ENCODE measurements at regions of chr5 and their contacts with region 1.

Region 1: DNA sequence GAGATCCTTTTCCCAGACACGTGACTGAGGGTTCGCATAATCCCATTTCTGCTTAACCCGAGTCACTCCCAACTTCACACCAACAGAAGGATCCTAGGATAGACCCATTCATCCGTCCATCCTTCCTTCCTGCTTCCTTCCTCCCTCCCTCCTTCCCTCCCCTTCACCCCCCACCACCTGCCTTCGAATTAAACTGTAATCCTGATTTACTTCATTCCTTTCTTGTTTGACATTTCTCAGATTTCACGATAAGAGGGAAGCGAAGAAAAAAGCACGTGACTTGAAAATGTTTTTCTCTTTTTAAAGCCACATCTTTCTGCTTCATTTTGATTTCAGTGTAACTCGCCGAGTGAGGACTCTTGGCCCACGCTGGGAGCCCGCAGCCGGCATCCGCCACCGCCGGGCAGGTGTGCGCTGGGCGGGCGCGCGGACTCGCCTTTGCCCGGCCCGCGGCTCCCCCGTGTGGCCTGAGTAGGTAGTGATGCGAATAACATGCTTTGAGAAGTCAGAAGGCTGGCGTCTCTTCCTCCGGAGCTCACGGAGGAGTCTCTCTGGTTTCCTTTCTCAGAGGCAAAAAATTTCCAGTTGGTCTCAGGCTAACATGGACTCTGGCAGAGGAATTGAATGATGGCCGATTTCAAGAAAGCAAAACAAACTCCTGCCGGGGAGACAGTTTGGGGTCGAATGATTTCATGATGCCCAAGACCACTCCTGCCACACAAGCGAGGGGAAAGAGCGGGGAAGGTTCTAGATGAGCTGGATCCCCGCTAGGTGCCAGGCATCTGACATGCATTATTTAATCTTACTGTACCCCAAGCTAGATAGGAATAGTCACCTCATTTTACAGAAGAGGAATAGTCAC is 117.7 kb downstream of the SLC12A2 start:
- DNase-seq: peak; percentile 92 to 93
- H3K4me3 ChIP-seq: peak overlapping the region; percentile 18 to 34 (median 26)
- H3K27ac ChIP-seq: peak overlapping the region in 4 of 5 donors; percentile 14 to 38 (median 20)
- H3K4me1 ChIP-seq: peaks cover 12 to 50% (median 32%) of the 10 kb centered on the region in 4 donors
- H3K27me3 ChIP-seq: no peaks in the 10 kb centered on the region
- CTCF ChIP-seq: peak in 5 of 7 experiments; percentile 81 to 87 (median 82)
- EP300 ChIP-seq: no peak
- POLR2A ChIP-seq: no peak

Region 2: DNA sequence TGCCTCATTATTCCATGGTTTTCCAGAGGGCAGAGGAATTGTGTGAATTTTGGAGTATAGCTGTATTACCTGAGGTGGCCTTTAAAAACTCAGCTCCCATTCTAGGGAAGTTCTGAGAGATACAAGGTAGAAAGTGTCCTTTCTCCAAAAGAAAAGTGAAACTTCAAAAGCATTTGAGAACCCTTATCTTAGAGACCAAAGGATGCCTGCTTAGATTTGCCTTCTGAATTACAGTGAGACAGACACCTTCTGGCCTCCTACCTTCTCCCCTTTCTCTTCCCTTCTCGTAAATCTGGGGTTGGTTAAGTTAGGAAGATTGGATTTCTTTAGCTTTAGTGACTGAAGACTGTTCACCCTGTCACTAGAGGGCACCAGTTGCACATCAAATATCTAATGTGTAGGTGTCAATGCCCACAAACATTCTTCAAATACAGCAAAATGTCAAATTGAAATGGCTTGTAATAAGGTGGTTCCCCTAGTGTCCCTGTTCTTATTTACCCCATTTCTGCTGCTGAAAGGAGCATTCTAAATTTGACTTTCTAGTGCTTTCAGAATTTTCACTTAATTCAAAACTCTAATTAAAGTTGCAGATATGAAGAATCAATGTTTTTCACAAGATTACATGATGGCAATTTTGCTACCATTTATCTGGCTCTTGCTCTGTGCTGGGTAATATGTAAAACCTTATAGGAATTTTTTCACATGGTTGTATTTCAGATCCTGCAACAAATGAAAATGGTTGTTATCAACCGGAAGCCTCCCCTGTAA is 637.1 kb before region 1 on chr5:
- intact Hi-C with region 1: loop called (anchors 10 kb)
- DNase-seq: peak; percentile 55 to 87
- H3K4me3 ChIP-seq: no peak overlapping the region
- H3K27ac ChIP-seq: no peak overlapping the region
- H3K4me1 ChIP-seq: peaks cover 5 to 28% (median 12%) of the 10 kb centered on the region in 4 donors
- H3K27me3 ChIP-seq: no peaks in the 10 kb centered on the region
- CTCF ChIP-seq: peak in 5 of 7 experiments; percentile 43 to 83 (median 66)
- EP300 ChIP-seq: no peak
- POLR2A ChIP-seq: no peak

Region 3: DNA sequence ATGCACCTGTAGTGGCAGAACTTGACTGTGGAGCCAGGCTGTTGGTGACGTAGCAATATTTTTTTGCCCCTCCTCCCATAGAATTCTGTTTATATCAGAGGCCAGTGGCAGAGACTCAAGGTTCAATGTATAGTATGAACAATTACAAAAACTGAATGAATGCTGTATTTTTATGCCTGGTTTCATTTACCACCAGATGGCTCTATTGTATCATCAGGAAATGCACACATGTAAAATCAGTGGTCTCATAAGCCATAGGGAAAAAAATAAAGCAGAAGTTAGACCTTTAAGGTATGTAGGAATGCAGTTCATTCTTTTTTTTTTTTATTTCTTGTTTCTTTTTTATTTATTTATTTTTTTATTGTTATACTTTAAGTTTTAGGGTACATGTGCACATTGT is 454.5 kb before region 1 on chr5:
- intact Hi-C with region 1: loop called (anchors 10 kb)
- DNase-seq: peak in 1 of 2 donors; percentile 57
- H3K4me3 ChIP-seq: no peak overlapping the region
- H3K27ac ChIP-seq: no peak overlapping the region
- H3K4me1 ChIP-seq: no peaks in the 10 kb centered on the region
- H3K27me3 ChIP-seq: no peaks in the 10 kb centered on the region
- CTCF ChIP-seq: peak in 4 of 7 experiments; percentile 14 to 37 (median 22)
- EP300 ChIP-seq: no peak
- POLR2A ChIP-seq: no peak

Region 4: GRCh38 chr5:128340648-128341420 is 139.5 kb after region 1 on chr5:
- intact Hi-C with region 1: no loop called
- DNase-seq: no peak
- H3K4me3 ChIP-seq: no peak overlapping the region
- H3K27ac ChIP-seq: no peak overlapping the region
- H3K4me1 ChIP-seq: peaks cover 0 to 6% (median under 1%) of the 10 kb centered on the region in 4 donors
- H3K27me3 ChIP-seq: no peaks in the 10 kb centered on the region
- CTCF ChIP-seq: no peak
- EP300 ChIP-seq: no peak
- POLR2A ChIP-seq: no peak

Region 5: DNA sequence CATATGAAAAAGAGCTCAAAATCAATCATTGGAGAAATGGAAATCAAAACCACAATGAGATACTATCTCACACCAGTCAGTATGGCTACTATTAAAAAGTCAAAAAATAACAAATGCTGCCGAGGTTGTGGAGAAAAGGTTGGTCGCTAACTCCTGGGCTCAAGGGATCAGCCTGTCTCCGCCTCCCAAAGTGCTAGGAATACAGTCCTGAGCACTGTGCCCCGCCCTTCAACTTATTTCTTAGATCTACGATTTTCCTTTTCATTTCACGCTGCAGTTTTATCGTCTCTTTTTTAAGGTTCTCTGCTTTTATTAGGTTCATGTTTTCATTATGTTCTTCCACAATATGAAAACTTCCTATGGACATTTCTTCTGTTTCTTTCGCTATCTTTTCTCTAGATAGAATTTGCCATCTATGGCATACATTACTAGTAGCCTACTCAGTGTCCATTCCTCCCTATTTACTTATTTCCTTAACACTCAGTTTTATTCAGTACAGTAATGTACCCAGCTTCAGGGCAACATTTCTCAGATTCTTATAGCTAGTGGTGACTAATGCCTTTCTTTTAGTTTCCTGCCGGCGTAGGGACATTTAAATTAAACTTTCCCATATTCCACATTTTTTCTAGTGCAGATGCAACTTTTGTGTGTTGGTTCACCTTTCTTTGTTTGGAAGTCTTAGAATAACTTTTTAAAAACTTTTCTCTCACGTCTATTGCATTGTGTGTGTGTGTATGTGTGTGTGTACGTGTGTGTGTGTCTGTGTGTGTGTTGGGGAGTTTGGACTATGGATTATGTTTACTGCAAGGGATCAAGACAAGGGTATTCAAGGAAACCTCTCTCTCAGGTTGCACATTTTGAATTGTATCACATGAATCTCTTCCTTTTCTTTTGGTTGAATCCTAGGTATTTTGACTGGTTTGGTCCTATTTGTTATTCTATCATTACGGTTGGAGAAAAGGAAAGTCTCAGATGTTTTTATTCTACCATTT is 358.3 kb after region 1 on chr5:
- intact Hi-C with region 1: no loop called
- DNase-seq: no peak
- H3K4me3 ChIP-seq: no peak overlapping the region
- H3K27ac ChIP-seq: no peak overlapping the region
- H3K4me1 ChIP-seq: no peaks in the 10 kb centered on the region
- H3K27me3 ChIP-seq: no peaks in the 10 kb centered on the region
- CTCF ChIP-seq: no peak
- EP300 ChIP-seq: no peak
- POLR2A ChIP-seq: no peak